Mammary epithelial cell (primary cell): ENCODE measurements at regions of chr9 and their contacts with region 1.

Region 1: DNA sequence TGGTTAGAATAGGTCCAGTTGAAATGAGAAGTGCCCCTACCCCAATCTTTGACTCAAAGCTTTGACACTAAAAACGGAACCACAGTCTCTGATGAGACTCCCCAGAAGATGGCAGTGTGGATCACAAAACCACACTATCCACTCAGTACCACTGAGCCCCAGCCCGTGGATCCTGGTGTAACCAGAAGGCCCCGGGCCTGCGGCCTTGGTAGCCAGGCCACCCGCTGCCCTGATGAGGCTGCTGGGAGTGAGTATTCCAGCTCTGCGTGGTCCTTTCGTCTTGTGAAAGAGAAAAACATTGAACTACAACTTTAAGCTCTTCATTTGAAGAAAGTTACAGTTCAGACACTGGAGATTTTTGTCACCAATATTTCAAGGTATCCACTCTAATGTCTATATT is 42.2 kb upstream of the FBP1 start:
- DNase-seq: peak; percentile 52
- H3K4me3 ChIP-seq: no peak overlapping the region
- H3K27ac ChIP-seq: no peak overlapping the region
- H3K4me1 ChIP-seq: no peaks in the 10 kb centered on the region
- H3K27me3 ChIP-seq: no peaks in the 10 kb centered on the region
- CTCF ChIP-seq: peak; percentile 54 to 71

Region 2: DNA sequence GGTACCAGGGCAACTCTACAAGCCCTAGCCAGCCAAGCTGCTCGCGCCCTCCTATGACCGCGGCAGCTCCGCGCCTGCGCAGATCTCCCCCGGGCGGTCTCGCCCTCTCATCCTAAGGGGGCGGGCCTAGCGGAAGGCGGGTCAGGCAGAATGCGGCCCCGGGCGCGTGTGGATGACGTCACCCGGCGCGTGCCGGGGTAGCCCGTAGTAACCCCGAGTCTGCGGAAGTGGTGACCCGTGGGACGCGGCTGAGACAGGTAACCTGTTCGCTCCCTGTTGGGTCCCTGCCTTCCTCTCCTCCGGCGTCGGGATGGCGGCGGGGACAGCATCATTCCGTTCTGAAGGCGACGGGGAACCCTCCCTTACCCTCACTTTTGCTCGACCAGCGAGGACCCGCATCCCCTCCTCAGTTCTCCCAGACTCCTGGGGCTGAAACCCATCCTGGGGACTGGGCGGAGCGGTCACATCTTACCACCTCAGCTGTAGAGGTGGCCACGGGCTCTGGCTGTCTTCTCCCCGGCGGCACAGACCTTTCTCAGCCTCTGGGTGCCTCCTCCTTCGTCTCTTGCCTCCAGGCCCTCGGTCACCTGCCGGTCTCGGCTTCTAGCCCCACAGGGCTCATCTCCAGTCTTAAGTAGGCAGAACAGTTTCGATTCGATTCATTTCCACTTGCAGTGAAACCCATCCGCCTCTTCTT is 45.1 kb after region 1 on chr9 and contains the start of gene AOPEP:
- CTCF ChIA-PET with region 1: no interaction called
- dilution Hi-C with region 1: no loop called
- in situ Hi-C with region 1: no loop called
- intact Hi-C with region 1: loop called (anchors 5 kb)
- DNase-seq: peak; percentile 94
- H3K4me3 ChIP-seq: peak within 1 kb of the TSS; percentile 81 to 96 (median 89)
- H3K27ac ChIP-seq: peak within 1 kb of the TSS; percentile 92
- H3K4me1 ChIP-seq: peaks cover 6% of the 10 kb centered on the region
- H3K27me3 ChIP-seq: no peaks in the 10 kb centered on the region
- CTCF ChIP-seq: no peak
- total RNA-seq, gene AOPEP: 25.6 to 80.7 TPM

Region 3: GRCh38 chr9:94882966-94883641 is 201.6 kb after region 1 on chr9:
- CTCF ChIA-PET with region 1: no interaction called
- dilution Hi-C with region 1: no loop called
- in situ Hi-C with region 1: no loop called
- intact Hi-C with region 1: loop called (anchors 10 kb)
- DNase-seq: no peak
- H3K4me3 ChIP-seq: no peak overlapping the region
- H3K27ac ChIP-seq: no peak overlapping the region
- H3K4me1 ChIP-seq: peaks cover 23% of the 10 kb centered on the region
- H3K27me3 ChIP-seq: no peaks in the 10 kb centered on the region
- CTCF ChIP-seq: no peak

Region 4: DNA sequence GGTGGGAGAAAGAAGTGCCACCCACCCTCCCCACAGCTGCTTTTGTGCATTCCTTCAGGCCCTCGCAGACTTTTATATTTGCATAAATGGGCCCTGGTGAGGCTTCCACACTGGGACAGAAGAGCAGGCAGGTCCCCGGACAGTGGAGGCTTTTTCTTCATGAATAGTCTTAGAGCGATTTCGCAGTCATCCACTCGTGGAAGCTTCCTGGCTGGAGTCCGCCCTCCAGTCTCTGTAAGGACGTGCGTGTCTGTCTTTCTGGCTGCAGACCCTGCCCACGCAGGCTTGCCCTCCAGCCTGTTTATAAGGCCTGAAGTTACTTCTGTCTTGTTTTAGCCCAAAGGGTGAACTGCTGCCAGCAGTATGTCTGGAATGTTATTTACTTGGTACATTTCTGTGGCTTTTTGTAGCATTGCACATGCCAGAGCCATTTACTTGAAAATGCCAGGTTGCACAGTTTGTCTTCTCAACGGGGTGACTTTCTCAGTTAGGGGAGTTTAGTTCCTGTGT is 240.6 kb after region 1 on chr9:
- CTCF ChIA-PET with region 1: no interaction called
- dilution Hi-C with region 1: no loop called
- in situ Hi-C with region 1: loop called in 1 of 2 experiments (anchors 25 kb)
- intact Hi-C with region 1: no loop called
- DNase-seq: peak; percentile 69
- H3K4me3 ChIP-seq: no peak overlapping the region
- H3K27ac ChIP-seq: peak overlapping the region; percentile 62
- H3K4me1 ChIP-seq: peaks cover 64% of the 10 kb centered on the region
- H3K27me3 ChIP-seq: no peaks in the 10 kb centered on the region
- CTCF ChIP-seq: no peak

Region 5: DNA sequence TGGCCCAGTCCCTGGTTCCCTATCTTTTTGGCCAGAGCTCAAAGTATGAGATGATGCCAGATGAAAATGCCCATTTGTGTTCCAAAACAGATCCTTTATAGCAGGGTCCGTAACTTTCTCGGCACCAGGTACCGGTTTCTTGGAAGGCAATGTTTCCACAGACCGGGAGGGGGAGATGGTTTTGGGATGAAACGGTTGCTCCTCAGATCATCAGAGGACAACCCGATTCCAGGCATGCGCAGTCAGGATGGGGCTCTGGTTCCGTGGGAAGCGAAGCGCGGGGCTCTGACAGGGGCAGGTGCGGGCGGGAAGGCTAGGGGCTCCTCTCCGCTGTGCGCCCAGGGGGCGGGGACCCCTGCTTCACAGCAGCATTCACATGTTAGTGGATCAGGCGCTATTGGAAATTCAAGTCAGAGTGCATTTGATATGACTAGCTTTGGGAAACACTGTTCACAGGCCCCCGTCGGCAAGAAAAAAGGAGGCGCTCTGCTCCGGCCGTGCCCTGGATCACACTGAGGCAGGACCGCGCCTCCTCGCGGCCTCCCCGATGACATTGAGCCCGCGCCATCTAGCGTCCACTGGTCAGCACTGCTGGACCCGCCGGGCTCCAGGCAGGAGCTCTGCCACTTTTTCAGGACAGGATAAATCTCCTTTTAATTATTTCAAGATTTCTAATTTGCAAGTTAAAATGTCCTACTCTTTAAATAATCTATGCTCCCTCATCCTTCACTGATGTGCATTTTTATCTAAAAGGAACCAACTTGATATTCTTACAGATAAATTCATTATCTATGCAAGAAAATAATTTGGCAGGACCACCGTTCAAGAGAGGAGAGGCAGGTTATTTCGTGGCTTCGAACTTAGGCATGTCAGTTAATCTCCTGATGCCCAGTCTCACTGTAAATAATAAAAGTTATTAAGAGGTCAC is 446.0 kb after region 1 on chr9:
- CTCF ChIA-PET with region 1: interaction called, 14 read pairs
- dilution Hi-C with region 1: loop called (anchors 25 kb)
- in situ Hi-C with region 1: loop called (anchors 5 kb)
- intact Hi-C with region 1: loop called (anchors 1 kb)
- DNase-seq: peak; percentile 65
- H3K4me3 ChIP-seq: peak overlapping the region; percentile 6 to 44 (median 29)
- H3K27ac ChIP-seq: no peak overlapping the region
- H3K4me1 ChIP-seq: peaks cover 5% of the 10 kb centered on the region
- H3K27me3 ChIP-seq: no peaks in the 10 kb centered on the region
- CTCF ChIP-seq: peak; percentile 94 to 100

Region 6: GRCh38 chr9:95167998-95168397 is 486.5 kb after region 1 on chr9:
- CTCF ChIA-PET with region 1: no interaction called
- dilution Hi-C with region 1: no loop called
- in situ Hi-C with region 1: no loop called
- intact Hi-C with region 1: loop called (anchors 2 kb)
- DNase-seq: peak; percentile 81
- H3K4me3 ChIP-seq: no peak overlapping the region
- H3K27ac ChIP-seq: no peak overlapping the region
- H3K4me1 ChIP-seq: peaks cover 3% of the 10 kb centered on the region
- H3K27me3 ChIP-seq: no peaks in the 10 kb centered on the region
- CTCF ChIP-seq: peak; percentile 82 to 87

Region 7: DNA sequence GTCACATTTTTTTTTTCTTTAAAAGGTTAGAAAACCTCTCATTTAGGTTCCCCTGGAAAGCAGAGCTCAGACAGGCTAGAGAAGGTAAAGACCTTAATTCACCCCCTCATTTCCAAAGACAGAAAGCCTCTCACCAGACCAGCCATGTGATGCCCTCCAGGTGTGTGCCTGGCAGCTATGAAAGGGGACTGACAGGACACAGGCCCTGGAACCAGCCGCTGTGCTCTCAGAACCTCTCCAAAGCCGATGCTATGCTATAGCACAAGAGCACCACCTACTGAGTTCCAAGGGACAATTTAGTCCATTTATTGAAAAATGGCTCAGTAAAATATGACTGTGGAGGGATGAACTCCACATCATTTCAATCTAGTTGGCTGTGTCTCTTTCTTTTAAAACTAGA is 587.2 kb after region 1 on chr9:
- CTCF ChIA-PET with region 1: no interaction called
- dilution Hi-C with region 1: no loop called
- in situ Hi-C with region 1: no loop called
- intact Hi-C with region 1: loop called (anchors 5 kb)
- DNase-seq: peak; percentile 26
- H3K4me3 ChIP-seq: no peak overlapping the region
- H3K27ac ChIP-seq: no peak overlapping the region
- H3K4me1 ChIP-seq: no peaks in the 10 kb centered on the region
- H3K27me3 ChIP-seq: no peaks in the 10 kb centered on the region
- CTCF ChIP-seq: peak in 1 of 2 donors; percentile 52